ENCODE measurements at regions of chr4 and their contacts with region 1.

Region 1: DNA sequence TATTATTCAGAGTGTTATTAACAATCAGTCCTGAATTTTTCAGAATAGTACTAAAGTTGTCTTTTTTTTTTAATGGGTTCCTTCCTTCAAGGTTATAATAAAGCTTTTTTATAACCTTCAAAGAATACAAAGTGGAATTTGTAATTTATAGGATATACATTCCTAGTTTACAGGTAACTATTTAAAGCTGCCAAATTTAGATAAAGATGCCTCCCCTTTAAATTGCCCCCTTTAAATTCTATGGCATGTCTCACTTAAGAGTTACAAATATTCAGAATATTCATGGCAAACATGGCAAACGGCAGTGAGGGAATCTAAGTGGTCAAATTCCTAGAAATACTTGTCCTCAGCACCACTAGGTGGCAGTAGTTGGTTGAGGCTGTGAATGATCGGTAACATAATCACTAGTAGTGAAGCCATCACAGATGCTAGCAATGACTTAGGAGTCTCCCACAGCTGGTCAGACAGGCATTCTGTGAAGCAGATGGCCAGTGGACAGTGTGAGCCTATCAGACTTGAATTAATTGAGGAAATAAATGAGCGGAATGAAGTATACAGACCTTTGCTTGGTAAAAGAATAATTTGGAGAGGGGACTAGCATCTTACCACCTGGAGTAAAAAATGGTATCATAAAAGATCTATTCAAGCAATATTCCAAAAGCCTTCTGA is 86.4 kb downstream of the CBR4 start:
- DNase-seq: no peak
- ATAC-seq: peak; percentile 52 to 62

Region 2: DNA sequence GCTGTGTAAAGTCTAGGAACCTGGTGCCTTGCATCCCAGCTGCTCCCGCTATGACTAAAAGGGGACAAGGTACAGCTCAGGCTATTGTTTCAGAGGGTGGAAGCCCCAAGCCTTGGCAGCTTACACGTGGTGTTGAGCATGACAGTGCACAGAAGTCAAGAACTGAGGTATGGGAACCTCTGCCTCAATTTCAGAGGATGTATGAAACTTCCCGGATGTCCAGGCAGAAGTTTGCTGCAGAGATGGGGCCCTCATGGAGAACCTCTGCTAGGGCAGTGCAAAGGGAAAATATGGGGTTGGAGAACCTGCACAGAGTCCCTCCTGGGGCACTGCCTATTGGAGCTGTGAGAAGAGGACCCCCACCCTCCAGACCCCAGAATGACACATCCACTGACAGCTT is 681.7 kb before region 1 on chr4:
- intact Hi-C with region 1: no loop called
- DNase-seq: no peak
- ATAC-seq: no peak

Region 3: GRCh38 chr4:168514249-168514852 is 409.3 kb before region 1 on chr4:
- intact Hi-C with region 1: loop called (anchors 10 kb)
- DNase-seq: no peak
- ATAC-seq: no peak

Region 4: DNA sequence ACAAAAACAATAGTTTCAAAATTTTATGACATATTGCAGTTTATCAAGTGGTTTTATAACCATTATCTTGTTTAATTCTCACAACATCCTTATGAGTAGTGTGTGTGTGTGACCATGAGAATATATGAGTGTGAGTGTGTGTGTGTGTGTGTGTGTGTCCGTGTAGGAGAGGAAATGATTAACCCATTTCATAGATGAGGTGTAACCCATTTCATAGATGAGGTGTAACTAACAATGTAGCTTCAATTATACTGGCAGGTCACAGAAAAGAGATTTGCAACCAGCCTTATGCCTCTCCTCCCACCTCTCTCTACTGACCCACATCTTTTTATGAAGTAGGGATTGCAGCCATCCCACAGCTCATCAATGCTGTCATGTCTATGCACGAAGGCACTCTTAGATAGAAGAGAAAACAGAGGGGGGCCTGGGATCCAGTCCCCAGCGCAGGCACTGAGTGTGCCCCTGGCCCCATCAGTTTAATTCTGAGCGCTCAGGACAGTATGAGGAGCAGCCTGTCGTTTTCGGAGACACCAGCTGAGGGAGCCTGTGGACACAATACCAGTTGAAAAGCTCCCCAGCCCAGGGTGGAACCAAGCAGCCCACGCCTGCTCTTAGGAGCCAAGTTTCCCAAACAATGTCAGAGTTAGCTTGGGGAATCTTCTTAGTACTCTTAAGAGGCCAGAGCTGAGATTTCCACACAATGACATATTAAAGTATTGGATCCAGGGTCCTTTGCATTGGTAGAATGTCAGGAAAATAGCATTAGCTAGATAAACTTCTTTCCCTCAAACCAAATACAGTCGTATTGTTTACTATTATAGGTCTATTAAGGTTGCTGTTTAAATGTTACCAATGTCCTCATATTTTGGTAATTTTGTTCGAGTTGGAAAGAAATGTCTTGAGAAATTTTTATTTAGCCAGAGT is 338.2 kb before region 1 on chr4:
- intact Hi-C with region 1: loop called in 1 of 2 experiments (anchors 5 kb)
- DNase-seq: peak; percentile 87
- ATAC-seq: peak; percentile 79 to 91

Region 5: GRCh38 chr4:169485791-169486742 is 562.4 kb after region 1 on chr4:
- intact Hi-C with region 1: loop called (anchors 5 to 10 kb)
- DNase-seq: no peak
- ATAC-seq: peak in 1 of 2 donors; percentile 47

Region 6: DNA sequence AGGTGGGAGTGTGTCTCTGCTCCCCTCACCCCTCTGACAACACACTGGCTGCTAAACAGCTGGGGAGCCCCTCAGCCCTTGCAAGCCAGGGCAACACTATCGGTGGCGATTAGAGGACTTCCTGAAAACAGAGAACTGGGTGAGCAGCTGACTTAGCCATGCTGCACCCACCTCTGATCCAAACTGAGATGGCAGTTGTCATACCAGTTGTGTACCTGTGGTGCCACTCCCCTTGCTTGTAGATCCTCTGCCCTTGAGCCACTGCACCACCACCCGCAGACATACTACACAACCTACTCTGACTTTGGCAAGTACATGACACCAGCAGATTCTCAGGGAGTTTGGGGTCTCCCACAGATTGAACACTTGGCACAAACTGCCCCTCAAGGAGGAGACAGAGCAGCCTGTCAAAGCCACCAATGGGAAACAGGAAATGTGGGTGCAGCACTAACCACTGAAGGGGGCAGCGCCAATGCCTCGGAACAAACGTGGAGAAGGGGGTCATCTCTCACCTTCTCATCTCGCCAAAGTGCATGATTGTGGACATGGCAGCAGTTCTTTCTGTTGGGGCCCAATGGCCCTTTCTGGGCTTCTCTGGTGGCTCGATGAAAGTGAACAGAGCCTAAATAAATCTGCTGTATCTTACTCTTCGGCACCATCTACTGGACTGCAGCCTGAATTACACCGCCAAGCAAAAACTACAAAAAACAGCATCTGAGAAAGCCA is 568.9 kb after region 1 on chr4:
- intact Hi-C with region 1: loop called (anchors 5 to 10 kb)
- DNase-seq: no peak
- ATAC-seq: no peak